SK-N-SH (cell line): ENCODE measurements at regions of chr7 and their contacts with region 1.

Region 1: GRCh38 chr7:70060298-70061068 is 462.2 kb downstream of the AUTS2 start:
- DNase-seq: no peak
- H3K4me3 ChIP-seq: no peak overlapping the region
- H3K27ac ChIP-seq: peak overlapping the region in 1 of 2 experiments; percentile 43; a peak in 1 of 4 replicates
- H3K4me1 ChIP-seq: peaks cover 0 to 14% of the 10 kb centered on the region in 2 experiments; a peak in 2 of 4 replicates
- H3K27me3 ChIP-seq: no peaks in the 10 kb centered on the region
- CTCF ChIP-seq: no peak
- EP300 ChIP-seq: no peak
- RAD21 ChIP-seq: no peak

Region 2: GRCh38 chr7:70016044-70016770 is 44.3 kb before region 1 on chr7:
- CTCF ChIA-PET with region 1: no interaction called
- POLR2A ChIA-PET with region 1: no interaction called
- DNase-seq: no peak
- H3K4me3 ChIP-seq: 0 out of 4 replicates have a peak overlapping the region, but pooled peaks of 1 of the 2 experiments have one; percentile 8
- H3K27ac ChIP-seq: peak overlapping the region in 1 of 2 experiments; percentile 25; a peak in 1 of 4 replicates
- H3K4me1 ChIP-seq: peaks cover 11 to 17% of the 10 kb centered on the region in 2 experiments; a peak in 3 of 4 replicates
- H3K27me3 ChIP-seq: no peaks in the 10 kb centered on the region
- CTCF ChIP-seq: no peak
- EP300 ChIP-seq: 0 out of 4 replicates have a peak, but pooled peaks of 1 of the 2 experiments have one; percentile 43
- RAD21 ChIP-seq: no peak

Region 3: GRCh38 chr7:70072220-70072619 is 11.7 kb after region 1 on chr7:
- CTCF ChIA-PET with region 1: interaction called, 12 read pairs
- POLR2A ChIA-PET with region 1: no interaction called
- DNase-seq: no peak
- H3K4me3 ChIP-seq: no peak overlapping the region
- H3K27ac ChIP-seq: peak overlapping the region in 1 of 2 experiments; percentile 31; a peak in 1 of 4 replicates
- H3K4me1 ChIP-seq: peaks cover 0 to 30% of the 10 kb centered on the region in 2 experiments; a peak in 2 of 4 replicates
- H3K27me3 ChIP-seq: no peaks in the 10 kb centered on the region
- CTCF ChIP-seq: no peak
- EP300 ChIP-seq: no peak
- RAD21 ChIP-seq: no peak